ENCODE measurements at regions of chr1 and their contacts with region 1.

Region 1: GRCh38 chr1:244272471-244273261 is 179.0 kb downstream of the ADSS2 start:
- DNase-seq: peak; percentile 53 to 76
- H3K4me3 ChIP-seq: no peak overlapping the region
- H3K4me3 Mint-ChIP-seq: no peak overlapping the region
- H3K27ac Mint-ChIP-seq: no peak overlapping the region
- H3K4me1 ChIP-seq: no peaks in the 10 kb centered on the region
- H3K4me1 Mint-ChIP-seq: no peaks in the 10 kb centered on the region
- H3K27me3 ChIP-seq: no peaks in the 10 kb centered on the region
- H3K27me3 Mint-ChIP-seq: no peaks in the 10 kb centered on the region
- CTCF ChIP-seq: peak; percentile 95 to 99

Region 2: GRCh38 chr1:243343970-243344937 is 928.4 kb before region 1 on chr1:
- CTCF ChIA-PET with region 1: no interaction called
- POLR2A ChIA-PET with region 1: no interaction called
- intact Hi-C with region 1: loop called (anchors 1 kb)
- DNase-seq: peak in 1 of 2 experiments; percentile 45
- H3K4me3 ChIP-seq: no peak overlapping the region
- H3K4me3 Mint-ChIP-seq: no peak overlapping the region
- H3K27ac Mint-ChIP-seq: no peak overlapping the region
- H3K4me1 ChIP-seq: no peaks in the 10 kb centered on the region
- H3K4me1 Mint-ChIP-seq: peaks cover 12% of the 10 kb centered on the region
- H3K27me3 ChIP-seq: no peaks in the 10 kb centered on the region
- H3K27me3 Mint-ChIP-seq: no peaks in the 10 kb centered on the region
- CTCF ChIP-seq: peak; percentile 68 to 71

Region 3: GRCh38 chr1:243708210-243708609 is 564.5 kb before region 1 on chr1:
- CTCF ChIA-PET with region 1: no interaction called
- POLR2A ChIA-PET with region 1: no interaction called
- intact Hi-C with region 1: loop called (anchors 1 kb)
- DNase-seq: no peak
- H3K4me3 ChIP-seq: no peak overlapping the region
- H3K4me3 Mint-ChIP-seq: no peak overlapping the region
- H3K27ac Mint-ChIP-seq: no peak overlapping the region
- H3K4me1 ChIP-seq: no peaks in the 10 kb centered on the region
- H3K4me1 Mint-ChIP-seq: no peaks in the 10 kb centered on the region
- H3K27me3 ChIP-seq: no peaks in the 10 kb centered on the region
- H3K27me3 Mint-ChIP-seq: peaks cover 3% of the 10 kb centered on the region
- CTCF ChIP-seq: peak in 1 of 2 experiments; percentile 37

Region 4: GRCh38 chr1:244012202-244012601 is 260.5 kb before region 1 on chr1:
- CTCF ChIA-PET with region 1: no interaction called
- POLR2A ChIA-PET with region 1: no interaction called
- intact Hi-C with region 1: loop called (anchors 2 kb)
- DNase-seq: no peak
- H3K4me3 ChIP-seq: no peak overlapping the region
- H3K4me3 Mint-ChIP-seq: no peak overlapping the region
- H3K27ac Mint-ChIP-seq: no peak overlapping the region
- H3K4me1 ChIP-seq: no peaks in the 10 kb centered on the region
- H3K4me1 Mint-ChIP-seq: no peaks in the 10 kb centered on the region
- H3K27me3 ChIP-seq: no peaks in the 10 kb centered on the region; the same call in 1 of the 2 replicates
- H3K27me3 Mint-ChIP-seq: peaks cover 17% of the 10 kb centered on the region
- CTCF ChIP-seq: no peak

Region 5: GRCh38 chr1:244163861-244164562 is 108.7 kb before region 1 on chr1:
- CTCF ChIA-PET with region 1: no interaction called
- POLR2A ChIA-PET with region 1: no interaction called
- intact Hi-C with region 1: loop called (anchors 5 kb)
- DNase-seq: peak in 1 of 2 experiments; percentile 48
- H3K4me3 ChIP-seq: no peak overlapping the region
- H3K4me3 Mint-ChIP-seq: no peak overlapping the region
- H3K27ac Mint-ChIP-seq: no peak overlapping the region
- H3K4me1 ChIP-seq: peaks cover 34% of the 10 kb centered on the region
- H3K4me1 Mint-ChIP-seq: peaks cover 7% of the 10 kb centered on the region
- H3K27me3 ChIP-seq: no peaks in the 10 kb centered on the region
- H3K27me3 Mint-ChIP-seq: no peaks in the 10 kb centered on the region
- CTCF ChIP-seq: no peak

Region 6: DNA sequence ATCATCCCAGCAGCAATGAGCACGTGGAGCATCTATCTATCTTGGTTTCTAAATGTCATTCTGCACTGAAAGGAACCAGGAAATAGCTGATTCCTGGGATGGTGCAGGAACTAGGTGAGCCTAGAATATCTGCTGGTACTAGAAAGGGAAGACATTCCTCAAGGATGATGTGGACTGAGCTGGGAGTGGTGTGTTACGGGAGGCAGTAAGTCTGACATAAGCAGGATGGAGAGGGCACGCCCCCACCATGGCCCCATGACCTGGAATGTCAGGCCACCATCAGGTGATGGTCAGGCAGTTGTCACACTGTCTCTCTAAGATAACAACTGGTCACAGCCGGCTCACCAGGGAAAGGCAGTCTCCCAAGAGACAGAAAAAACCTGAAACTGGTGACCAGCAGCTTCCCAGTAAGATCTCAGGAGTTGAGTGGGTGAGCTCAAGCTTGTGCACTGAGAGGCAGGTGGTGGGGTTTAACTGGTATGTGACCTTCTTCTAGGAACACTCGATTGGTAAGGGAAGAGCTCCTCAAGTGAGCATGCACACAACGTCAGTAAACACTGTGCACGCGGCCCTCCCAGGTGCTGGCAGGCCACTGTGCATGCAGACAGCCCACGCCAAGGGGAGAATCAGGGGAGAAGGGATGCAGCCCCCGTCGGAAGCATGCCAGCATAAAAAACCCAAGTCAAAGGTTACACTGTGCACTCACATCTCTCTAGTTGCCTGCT is 30.4 kb after region 1 on chr1:
- CTCF ChIA-PET with region 1: no interaction called
- POLR2A ChIA-PET with region 1: no interaction called
- intact Hi-C with region 1: loop called (anchors 1 kb)
- DNase-seq: peak; percentile 77 to 89
- H3K4me3 ChIP-seq: no peak overlapping the region
- H3K4me3 Mint-ChIP-seq: no peak overlapping the region
- H3K27ac Mint-ChIP-seq: no peak overlapping the region
- H3K4me1 ChIP-seq: peaks cover 20% of the 10 kb centered on the region
- H3K4me1 Mint-ChIP-seq: peaks cover 32% of the 10 kb centered on the region
- H3K27me3 ChIP-seq: no peaks in the 10 kb centered on the region
- H3K27me3 Mint-ChIP-seq: no peaks in the 10 kb centered on the region
- CTCF ChIP-seq: no peak